PC-9 (cell line): ENCODE measurements at regions of chr5 and their contacts with region 1.

Region 1: DNA sequence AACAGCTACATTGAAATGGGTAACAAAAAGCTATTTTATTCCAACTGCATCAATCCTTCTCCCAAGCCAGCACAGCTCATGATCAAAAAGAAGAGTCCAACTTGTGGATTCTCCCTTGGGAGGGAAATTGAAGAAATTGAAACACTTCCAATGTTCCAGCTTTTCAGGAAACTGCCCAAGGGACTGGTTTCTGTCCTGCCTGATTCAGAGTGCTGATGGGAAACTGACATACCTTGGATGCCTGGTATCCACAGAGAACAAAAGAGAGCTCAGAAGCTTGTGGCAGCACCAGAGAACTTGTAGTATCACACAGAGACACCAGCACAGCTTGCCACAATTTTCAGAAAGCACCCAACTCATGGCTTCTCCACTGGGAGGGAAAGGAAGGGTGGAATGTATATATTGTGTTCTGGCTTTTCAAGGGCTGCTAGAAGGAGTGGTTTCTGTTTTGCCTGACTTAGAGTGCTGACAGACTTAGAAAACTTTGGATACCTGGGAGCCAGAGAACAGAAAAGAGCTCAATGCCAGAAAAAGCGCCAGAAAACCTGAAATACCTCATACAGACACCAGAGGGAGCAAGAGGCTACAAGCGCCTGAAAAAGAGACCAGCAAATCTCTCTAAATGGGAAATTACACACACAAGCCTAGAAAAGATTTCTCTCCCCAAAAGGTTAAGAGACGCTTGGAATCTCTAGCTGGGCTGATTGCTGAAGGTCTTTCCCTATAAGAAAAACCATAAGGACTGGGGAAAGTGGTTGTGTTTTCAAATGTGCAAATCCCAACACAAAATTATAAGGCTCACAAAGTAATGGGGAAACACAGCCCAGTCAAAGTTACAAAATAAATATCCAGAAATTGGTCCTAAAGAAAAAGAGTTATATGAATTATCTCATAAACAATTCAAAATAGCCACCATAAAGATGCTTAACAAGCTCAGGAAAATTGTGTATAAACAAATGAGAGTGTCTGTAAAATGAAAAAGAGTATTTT is 178.8 kb downstream of the SPOCK1 start:
- DNase-seq: peak; percentile 39 to 56
- H3K4me3 ChIP-seq: no peak overlapping the region
- H3K27ac ChIP-seq: no peak overlapping the region
- H3K4me1 ChIP-seq: 0 out of 2 replicates have a peak, but pooled peaks cover 9% of the 10 kb centered on the region
- H3K27me3 ChIP-seq: no peaks in the 10 kb centered on the region
- CTCF ChIP-seq: peak; percentile 92

Region 2: GRCh38 chr5:136802383-136802782 is 518.0 kb before region 1 on chr5:
- CTCF ChIA-PET with region 1: interaction called, 5 read pairs
- POLR2A ChIA-PET with region 1: no interaction called
- intact Hi-C with region 1: loop called (anchors 1 kb)
- DNase-seq: peak in 1 of 2 experiments; percentile 21
- H3K4me3 ChIP-seq: no peak overlapping the region
- H3K27ac ChIP-seq: no peak overlapping the region
- H3K4me1 ChIP-seq: no peaks in the 10 kb centered on the region
- H3K27me3 ChIP-seq: no peaks in the 10 kb centered on the region
- CTCF ChIP-seq: peak; percentile 67

Region 3: GRCh38 chr5:137036640-137037039 is 283.7 kb before region 1 on chr5:
- CTCF ChIA-PET with region 1: no interaction called
- POLR2A ChIA-PET with region 1: no interaction called
- intact Hi-C with region 1: no loop called
- DNase-seq: peak in 1 of 2 experiments; percentile 25
- H3K4me3 ChIP-seq: no peak overlapping the region
- H3K27ac ChIP-seq: no peak overlapping the region
- H3K4me1 ChIP-seq: no peaks in the 10 kb centered on the region; the same call in 1 of the 2 replicates
- H3K27me3 ChIP-seq: no peaks in the 10 kb centered on the region
- CTCF ChIP-seq: no peak

Region 4: GRCh38 chr5:137051165-137051564 is 269.2 kb before region 1 on chr5:
- CTCF ChIA-PET with region 1: no interaction called
- POLR2A ChIA-PET with region 1: no interaction called
- intact Hi-C with region 1: loop called (anchors 5 kb)
- DNase-seq: no peak
- H3K4me3 ChIP-seq: no peak overlapping the region
- H3K27ac ChIP-seq: no peak overlapping the region
- H3K4me1 ChIP-seq: no peaks in the 10 kb centered on the region
- H3K27me3 ChIP-seq: no peaks in the 10 kb centered on the region
- CTCF ChIP-seq: peak; percentile 62

Region 5: DNA sequence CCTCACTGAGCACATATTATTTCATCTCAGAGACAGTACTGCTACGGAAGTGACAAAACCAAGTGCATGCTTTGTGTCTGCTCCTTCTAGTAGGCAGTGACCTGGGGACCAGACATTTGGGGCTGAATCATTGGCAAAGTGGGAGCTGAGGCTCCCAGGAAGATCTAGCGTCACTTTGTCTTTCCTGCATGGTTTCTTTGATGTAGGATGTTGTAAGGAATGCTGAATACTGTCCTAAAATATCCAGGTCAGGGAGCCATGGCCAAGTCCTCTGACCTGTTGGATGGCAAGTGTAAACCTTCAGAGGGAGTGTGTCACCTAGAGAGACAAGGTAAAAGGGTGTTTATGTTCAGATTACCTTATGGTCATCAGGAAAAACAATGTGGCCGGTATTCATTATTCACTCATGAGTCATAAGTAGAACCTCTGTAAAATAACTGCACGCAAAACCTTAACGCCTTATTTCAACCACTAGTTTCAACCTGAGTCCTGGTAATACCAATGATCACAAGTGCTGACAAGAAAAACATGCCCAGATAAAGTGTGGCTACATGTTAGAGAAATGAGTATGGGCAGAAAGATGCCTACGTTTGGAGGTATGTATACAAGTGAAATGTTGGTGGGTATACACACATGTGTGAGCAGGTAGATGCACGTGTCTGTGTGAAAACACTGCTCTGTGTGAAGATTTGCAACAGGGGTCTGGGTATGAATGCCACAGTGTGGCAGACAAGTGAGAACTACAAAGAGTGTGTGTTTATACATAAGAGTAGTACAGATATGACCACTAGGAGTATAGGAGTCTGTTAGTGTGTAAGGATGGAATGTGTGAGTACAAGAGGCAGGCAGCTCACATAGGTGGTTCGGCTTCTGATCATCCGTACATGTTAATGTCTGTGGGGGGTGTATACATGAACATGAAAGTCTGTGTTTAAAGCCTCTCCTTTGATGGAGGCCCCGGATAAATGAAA is 85.1 kb before region 1 on chr5:
- CTCF ChIA-PET with region 1: interaction called, 6 read pairs
- POLR2A ChIA-PET with region 1: no interaction called
- intact Hi-C with region 1: loop called (anchors 5 kb)
- DNase-seq: peak; percentile 58 to 98
- H3K4me3 ChIP-seq: 0 out of 2 replicates have a peak overlapping the region, but pooled peaks have one; percentile 12
- H3K27ac ChIP-seq: peak overlapping the region; percentile 81
- H3K4me1 ChIP-seq: peaks cover 57% of the 10 kb centered on the region
- H3K27me3 ChIP-seq: no peaks in the 10 kb centered on the region
- CTCF ChIP-seq: no peak

Region 6: GRCh38 chr5:137254119-137255090 is 65.9 kb before region 1 on chr5:
- CTCF ChIA-PET with region 1: no interaction called
- POLR2A ChIA-PET with region 1: no interaction called
- intact Hi-C with region 1: no loop called
- DNase-seq: peak in 1 of 2 experiments; percentile 26
- H3K4me3 ChIP-seq: no peak overlapping the region
- H3K27ac ChIP-seq: no peak overlapping the region
- H3K4me1 ChIP-seq: no peaks in the 10 kb centered on the region
- H3K27me3 ChIP-seq: no peaks in the 10 kb centered on the region
- CTCF ChIP-seq: no peak

Region 7: DNA sequence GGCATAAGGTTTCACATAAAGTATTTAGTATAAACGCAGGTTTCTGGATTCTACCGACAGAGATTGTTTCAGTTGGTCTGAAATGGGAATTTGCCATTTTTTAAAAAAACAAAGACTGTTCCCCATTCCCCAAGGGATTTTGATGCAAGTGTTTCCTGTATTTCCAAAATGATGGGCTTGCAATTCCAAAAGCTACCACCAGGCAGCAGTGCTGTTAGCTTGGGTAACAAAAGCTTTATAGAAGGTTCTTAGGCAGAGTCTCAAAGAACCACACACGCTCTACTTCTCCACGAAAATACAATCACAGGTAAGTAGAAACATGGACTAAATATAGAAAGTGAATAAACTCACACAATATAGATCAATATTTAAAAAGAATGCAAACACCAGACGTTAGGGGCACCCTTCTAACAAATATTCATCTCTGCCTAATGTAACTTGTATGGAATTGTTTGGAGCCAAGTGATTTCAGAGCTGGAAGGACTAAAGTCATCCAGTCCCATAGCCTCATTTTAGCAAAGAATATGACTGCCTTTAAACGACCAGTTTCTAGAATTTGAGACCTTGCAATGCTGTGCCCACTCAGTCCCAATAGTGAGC is 24.5 kb after region 1 on chr5:
- CTCF ChIA-PET with region 1: interaction called, 11 read pairs
- POLR2A ChIA-PET with region 1: no interaction called
- intact Hi-C with region 1: no loop called
- DNase-seq: no peak
- H3K4me3 ChIP-seq: no peak overlapping the region
- H3K27ac ChIP-seq: no peak overlapping the region
- H3K4me1 ChIP-seq: peaks cover 25% of the 10 kb centered on the region
- H3K27me3 ChIP-seq: no peaks in the 10 kb centered on the region
- CTCF ChIP-seq: peak; percentile 86

Region 8: GRCh38 chr5:137415231-137415681 is 94.9 kb after region 1 on chr5:
- CTCF ChIA-PET with region 1: no interaction called
- POLR2A ChIA-PET with region 1: no interaction called
- intact Hi-C with region 1: no loop called
- DNase-seq: peak in 1 of 2 experiments; percentile 14
- H3K4me3 ChIP-seq: no peak overlapping the region
- H3K27ac ChIP-seq: no peak overlapping the region
- H3K4me1 ChIP-seq: no peaks in the 10 kb centered on the region
- H3K27me3 ChIP-seq: no peaks in the 10 kb centered on the region
- CTCF ChIP-seq: no peak

Region 9: GRCh38 chr5:137605411-137605810 is 285.1 kb after region 1 on chr5:
- CTCF ChIA-PET with region 1: interaction called, 13 read pairs
- POLR2A ChIA-PET with region 1: no interaction called
- intact Hi-C with region 1: loop called (anchors 5 kb)
- DNase-seq: no peak
- H3K4me3 ChIP-seq: no peak overlapping the region
- H3K27ac ChIP-seq: no peak overlapping the region
- H3K4me1 ChIP-seq: no peaks in the 10 kb centered on the region
- H3K27me3 ChIP-seq: peaks cover 49% of the 10 kb centered on the region
- CTCF ChIP-seq: peak; percentile 38

Region 10: GRCh38 chr5:138128334-138128733 is 808.0 kb after region 1 on chr5:
- CTCF ChIA-PET with region 1: no interaction called
- POLR2A ChIA-PET with region 1: no interaction called
- intact Hi-C with region 1: loop called (anchors 5 kb)
- DNase-seq: no peak
- H3K4me3 ChIP-seq: no peak overlapping the region
- H3K27ac ChIP-seq: no peak overlapping the region
- H3K4me1 ChIP-seq: no peaks in the 10 kb centered on the region; the same call in 1 of the 2 replicates
- H3K27me3 ChIP-seq: no peaks in the 10 kb centered on the region
- CTCF ChIP-seq: no peak